ENCODE measurements at regions of chr2 and their contacts with region 1.

Region 1: GRCh38 chr2:238518172-238518820 is 91.6 kb downstream of the ASB1 start:
- DNase-seq: no peak
- H3K4me3 ChIP-seq: no peak overlapping the region
- CTCF ChIP-seq: no peak

Region 2: GRCh38 chr2:237966565-237967462 is 551.5 kb before region 1 on chr2 and contains the start of gene UBE2F:
- in situ Hi-C with region 1: no loop called
- DNase-seq: peak; percentile 91
- H3K4me3 ChIP-seq: peak within 1 kb of the TSS; percentile 73
- CTCF ChIP-seq: no peak

Region 3: GRCh38 chr2:238426568-238427434 is 91.5 kb before region 1 on chr2 and contains the start of gene ASB1:
- in situ Hi-C with region 1: no loop called
- DNase-seq: peak; percentile 76
- H3K4me3 ChIP-seq: peak within 1 kb of the TSS; percentile 85
- CTCF ChIP-seq: no peak

Region 4: DNA sequence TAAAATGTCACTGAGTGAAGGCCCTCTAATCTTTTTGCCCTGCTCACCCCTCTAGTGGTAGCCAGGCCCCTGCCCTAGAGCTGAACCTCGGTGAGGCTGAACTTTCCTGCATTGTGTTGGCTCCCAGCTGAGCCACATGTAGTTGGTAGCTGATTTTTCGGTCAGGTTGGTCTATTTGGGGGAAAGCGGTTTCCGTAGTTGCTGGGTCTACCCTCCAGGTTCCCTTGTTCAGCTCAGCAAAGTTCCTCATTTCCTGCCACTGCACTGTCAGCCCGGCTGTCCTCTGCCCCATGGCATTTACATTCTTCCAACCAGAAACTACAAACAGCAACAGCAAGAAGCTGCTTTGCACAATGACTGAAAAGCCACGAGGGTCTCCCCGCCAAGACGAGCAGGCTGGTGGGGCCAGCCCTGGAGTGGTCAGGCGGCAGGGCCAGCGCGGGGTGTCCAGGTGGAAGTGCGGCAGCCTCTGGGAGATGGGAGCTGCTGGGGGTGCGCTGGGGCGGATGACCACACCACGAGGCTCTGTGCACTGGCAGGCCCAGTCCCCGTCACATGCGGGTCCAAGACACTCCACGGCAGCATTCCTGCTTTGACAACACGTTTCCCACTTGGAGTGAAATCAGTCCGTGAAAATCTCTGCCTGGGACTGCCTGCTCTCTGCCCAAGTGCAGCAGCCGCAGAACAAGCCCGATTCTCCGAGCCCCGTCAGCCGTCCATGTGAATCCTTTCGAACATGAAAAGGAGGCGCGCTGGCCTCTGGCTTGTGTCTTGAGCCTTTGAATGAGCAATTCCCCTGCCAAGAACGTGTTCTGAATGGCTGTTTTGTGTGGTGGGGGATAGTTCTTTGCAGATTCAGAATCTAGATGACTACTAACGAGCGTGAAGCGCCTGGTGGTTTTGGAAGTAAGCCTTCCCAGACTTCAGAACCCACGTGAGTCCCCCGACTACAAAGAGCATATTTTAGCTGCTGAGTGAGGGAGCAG is 67.8 kb after region 1 on chr2:
- in situ Hi-C with region 1: loop called (anchors 5 kb)
- DNase-seq: peak; percentile 93
- H3K4me3 ChIP-seq: no peak overlapping the region
- CTCF ChIP-seq: no peak